ENCODE measurements at regions of chr10 and their contacts with region 1.

Region 1: DNA sequence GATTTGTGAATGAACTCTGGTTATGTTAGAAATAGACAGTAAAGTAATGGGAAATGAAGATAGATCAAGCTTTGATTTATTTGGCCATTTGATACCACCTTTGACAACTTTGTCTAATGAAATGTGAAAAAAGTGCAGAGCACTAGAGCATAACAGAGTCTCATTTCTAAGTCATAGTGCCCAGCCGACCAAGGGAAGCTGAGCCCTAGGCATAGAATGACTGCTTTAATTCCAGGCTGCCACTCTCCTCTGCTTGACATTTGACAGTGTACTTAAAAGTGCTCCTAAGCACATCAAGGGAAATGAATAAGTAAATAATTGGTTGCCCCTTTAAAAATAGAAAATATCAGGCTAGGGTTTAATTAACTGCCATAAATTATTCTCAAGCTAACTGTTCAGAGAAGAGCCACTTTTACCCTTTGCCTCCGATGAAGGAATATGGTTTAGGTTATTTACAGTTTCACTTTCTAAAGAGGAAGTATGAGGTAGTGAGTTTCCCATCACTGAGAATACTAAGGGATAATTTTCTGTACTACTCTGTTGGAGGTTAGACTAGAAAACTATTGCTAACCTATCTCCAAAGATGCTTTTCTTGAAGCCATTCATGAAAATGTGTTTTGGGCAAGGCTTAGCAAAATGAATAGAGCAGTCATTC is 591.6 kb downstream of the REEP3 start:
- DNase-seq: no peak
- H3K4me3 ChIP-seq: no peak overlapping the region
- CTCF ChIP-seq: no peak
- POLR2A ChIP-seq: no peak

Region 2: DNA sequence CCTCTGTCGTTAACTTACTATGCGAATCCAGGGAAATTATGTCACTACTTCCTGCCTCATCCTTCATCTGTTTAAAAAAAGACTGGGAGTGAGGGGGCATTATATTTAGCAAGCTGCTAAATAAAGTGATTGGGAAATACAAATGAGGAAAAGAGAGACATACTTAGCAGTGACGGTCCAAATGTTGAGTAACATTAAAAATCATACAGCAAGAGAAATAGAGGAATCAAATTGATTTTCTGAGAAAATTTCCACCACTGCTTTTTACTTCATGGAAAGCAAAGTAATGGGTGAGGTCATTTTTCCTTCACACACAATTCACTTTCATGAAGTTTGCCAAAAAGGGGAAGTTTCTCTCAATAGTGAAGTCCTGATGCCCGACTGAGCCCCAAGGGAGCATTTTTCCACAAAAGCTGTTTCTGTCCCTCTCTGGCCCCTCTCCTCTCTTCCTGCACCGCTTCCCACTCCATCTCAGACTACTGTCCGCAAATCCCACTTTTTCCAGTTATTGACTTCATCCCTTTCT is 1370.2 kb before region 1 on chr10:
- intact Hi-C with region 1: no loop called
- DNase-seq: no peak
- H3K4me3 ChIP-seq: no peak overlapping the region
- CTCF ChIP-seq: no peak
- POLR2A ChIP-seq: no peak

Region 3: DNA sequence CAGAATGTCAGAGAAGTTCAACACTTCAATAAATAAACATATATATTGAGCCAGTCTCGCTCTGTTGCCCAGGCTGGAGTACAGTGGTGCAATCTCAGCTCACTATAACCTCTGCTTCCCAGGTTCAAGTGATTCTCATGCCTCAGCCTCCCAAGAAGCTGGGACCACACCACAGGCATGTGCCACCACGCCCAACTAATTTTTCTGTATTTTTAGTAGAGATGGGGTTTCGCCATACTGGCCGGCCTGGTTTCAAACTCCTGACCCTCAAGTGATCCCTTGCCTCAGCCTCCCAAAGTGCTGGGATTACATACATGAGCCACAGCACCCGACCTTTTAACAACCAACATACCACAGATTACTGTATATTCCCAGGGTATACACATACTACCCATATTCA is 781.2 kb before region 1 on chr10:
- intact Hi-C with region 1: loop called (anchors 5 kb)
- DNase-seq: no peak
- H3K4me3 ChIP-seq: no peak overlapping the region
- CTCF ChIP-seq: no peak
- POLR2A ChIP-seq: no peak

Region 4: GRCh38 chr10:64054392-64054791 is 58.4 kb before region 1 on chr10:
- intact Hi-C with region 1: loop called (anchors 2 kb)
- DNase-seq: no peak
- H3K4me3 ChIP-seq: no peak overlapping the region
- CTCF ChIP-seq: no peak
- POLR2A ChIP-seq: no peak

Region 5: DNA sequence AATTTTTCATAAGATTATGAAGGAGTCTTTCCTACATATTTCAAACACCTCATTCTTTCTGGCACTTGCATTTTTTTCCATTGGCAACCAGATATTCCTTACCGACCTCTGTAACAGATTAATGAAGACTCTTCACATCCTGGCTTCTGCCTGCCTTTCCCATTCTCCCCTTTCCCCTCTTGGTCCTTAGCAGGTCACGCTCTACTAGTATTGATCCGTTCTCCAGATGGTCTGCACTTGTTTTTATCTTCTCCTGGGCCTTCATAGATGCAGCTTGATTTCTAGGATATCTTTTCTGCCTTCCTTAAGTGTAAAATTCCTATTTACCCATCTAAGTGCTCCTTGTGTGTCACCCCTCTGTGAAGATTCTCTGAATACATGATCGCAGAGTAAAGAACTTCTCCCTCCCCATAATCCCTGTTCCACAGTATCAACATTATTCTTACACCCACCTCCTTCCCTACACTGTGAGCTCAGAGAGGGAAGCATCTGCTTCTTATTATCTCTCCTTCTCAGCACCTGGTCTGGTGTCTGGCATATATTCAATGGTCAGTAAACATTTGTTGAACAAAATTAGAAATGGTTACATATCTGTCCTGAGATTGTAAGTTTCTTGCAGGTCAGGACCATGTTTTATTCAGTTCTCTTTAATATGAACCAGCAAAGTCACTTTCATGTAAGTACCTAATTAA is 62.6 kb after region 1 on chr10:
- intact Hi-C with region 1: no loop called
- DNase-seq: no peak
- H3K4me3 ChIP-seq: no peak overlapping the region
- CTCF ChIP-seq: no peak
- POLR2A ChIP-seq: no peak